SK-N-SH (cell line): ENCODE measurements at regions of chr18 and their contacts with region 1.

Region 1: GRCh38 chr18:70428439-70428838 is 139.6 kb downstream of the SOCS6 start:
- DNase-seq: no peak
- H3K4me3 ChIP-seq: no peak overlapping the region
- H3K27ac ChIP-seq: no peak overlapping the region
- H3K4me1 ChIP-seq: no peaks in the 10 kb centered on the region
- H3K27me3 ChIP-seq: no peaks in the 10 kb centered on the region
- CTCF ChIP-seq: no peak
- EP300 ChIP-seq: no peak
- RAD21 ChIP-seq: no peak

Region 2: DNA sequence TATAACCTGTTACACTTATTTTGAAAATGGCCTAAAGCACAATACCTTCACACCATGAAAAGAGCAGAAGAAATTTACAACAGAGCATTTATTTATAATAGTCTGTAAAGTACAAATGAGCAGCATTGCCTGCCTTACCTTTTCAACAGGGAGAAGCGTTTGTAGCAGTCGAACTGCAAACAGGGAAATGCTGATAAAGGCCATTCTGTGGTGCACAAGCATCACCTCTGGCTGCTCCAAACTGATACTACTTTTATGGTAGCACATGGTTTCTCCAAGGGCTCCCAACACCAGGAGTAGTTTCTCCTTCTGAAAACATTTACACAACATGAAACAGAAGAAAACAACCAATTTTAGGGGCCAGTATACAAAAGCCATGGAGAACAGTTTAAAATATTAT is 251.9 kb before region 1 on chr18:
- CTCF ChIA-PET with region 1: no interaction called
- POLR2A ChIA-PET with region 1: no interaction called
- DNase-seq: no peak
- H3K4me3 ChIP-seq: no peak overlapping the region
- H3K27ac ChIP-seq: no peak overlapping the region
- H3K4me1 ChIP-seq: peaks cover 0 to 7% of the 10 kb centered on the region in 2 experiments; a peak in 2 of 4 replicates
- H3K27me3 ChIP-seq: no peaks in the 10 kb centered on the region
- CTCF ChIP-seq: no peak
- EP300 ChIP-seq: no peak
- RAD21 ChIP-seq: no peak

Region 3: DNA sequence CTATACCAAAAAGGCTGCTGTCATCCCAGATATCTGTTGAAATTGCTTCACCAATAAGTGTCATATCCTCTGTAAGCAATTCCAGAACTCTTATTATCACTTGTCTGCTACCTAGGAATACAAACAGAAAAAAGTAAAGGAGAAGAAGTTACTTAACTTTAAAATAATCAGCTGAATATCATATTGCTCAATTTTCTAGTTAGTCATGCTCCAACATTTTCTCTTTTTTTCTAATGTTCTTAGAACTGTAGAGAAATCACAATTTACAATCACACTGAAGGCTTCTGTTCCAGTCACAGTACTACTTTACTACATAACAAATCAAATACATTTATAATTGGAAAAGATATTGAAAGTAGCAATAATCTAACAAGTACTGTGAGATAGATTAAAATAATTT is 240.3 kb before region 1 on chr18:
- CTCF ChIA-PET with region 1: interaction called, 127 read pairs
- POLR2A ChIA-PET with region 1: no interaction called
- DNase-seq: no peak
- H3K4me3 ChIP-seq: no peak overlapping the region
- H3K27ac ChIP-seq: no peak overlapping the region
- H3K4me1 ChIP-seq: no peaks in the 10 kb centered on the region
- H3K27me3 ChIP-seq: no peaks in the 10 kb centered on the region
- CTCF ChIP-seq: no peak
- EP300 ChIP-seq: no peak
- RAD21 ChIP-seq: no peak

Region 4: DNA sequence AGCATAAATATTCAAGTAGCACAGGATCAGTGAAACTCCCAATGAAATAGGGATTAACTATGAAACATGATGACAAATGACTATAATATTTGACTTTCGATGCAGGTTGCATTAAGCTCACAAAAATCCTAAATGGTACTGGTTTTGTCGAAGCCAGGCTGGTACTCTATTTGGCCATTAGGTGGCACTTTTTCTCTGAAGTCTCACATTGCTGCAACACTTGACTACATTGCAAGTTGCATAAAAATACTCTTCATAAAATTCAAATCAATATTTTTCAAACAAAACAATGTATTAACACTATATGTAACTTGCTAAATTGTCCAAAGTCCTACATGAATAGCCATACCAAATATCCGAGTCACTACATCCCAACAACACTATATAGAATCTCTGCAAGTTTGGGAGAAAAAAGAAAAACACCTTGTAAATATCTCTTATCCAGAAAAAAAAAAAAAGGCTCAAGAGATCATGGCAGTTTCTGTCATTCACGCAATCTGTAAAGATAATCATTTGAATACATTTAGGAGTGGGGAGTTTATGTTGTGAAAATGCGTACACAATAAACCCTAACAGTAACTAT is 232.5 kb before region 1 on chr18:
- CTCF ChIA-PET with region 1: interaction called, 127 read pairs
- POLR2A ChIA-PET with region 1: no interaction called
- DNase-seq: peak; percentile 54
- H3K4me3 ChIP-seq: no peak overlapping the region
- H3K27ac ChIP-seq: no peak overlapping the region
- H3K4me1 ChIP-seq: no peaks in the 10 kb centered on the region
- H3K27me3 ChIP-seq: no peaks in the 10 kb centered on the region
- CTCF ChIP-seq: peak; percentile 96
- EP300 ChIP-seq: no peak
- RAD21 ChIP-seq: peak; percentile 91

Region 5: DNA sequence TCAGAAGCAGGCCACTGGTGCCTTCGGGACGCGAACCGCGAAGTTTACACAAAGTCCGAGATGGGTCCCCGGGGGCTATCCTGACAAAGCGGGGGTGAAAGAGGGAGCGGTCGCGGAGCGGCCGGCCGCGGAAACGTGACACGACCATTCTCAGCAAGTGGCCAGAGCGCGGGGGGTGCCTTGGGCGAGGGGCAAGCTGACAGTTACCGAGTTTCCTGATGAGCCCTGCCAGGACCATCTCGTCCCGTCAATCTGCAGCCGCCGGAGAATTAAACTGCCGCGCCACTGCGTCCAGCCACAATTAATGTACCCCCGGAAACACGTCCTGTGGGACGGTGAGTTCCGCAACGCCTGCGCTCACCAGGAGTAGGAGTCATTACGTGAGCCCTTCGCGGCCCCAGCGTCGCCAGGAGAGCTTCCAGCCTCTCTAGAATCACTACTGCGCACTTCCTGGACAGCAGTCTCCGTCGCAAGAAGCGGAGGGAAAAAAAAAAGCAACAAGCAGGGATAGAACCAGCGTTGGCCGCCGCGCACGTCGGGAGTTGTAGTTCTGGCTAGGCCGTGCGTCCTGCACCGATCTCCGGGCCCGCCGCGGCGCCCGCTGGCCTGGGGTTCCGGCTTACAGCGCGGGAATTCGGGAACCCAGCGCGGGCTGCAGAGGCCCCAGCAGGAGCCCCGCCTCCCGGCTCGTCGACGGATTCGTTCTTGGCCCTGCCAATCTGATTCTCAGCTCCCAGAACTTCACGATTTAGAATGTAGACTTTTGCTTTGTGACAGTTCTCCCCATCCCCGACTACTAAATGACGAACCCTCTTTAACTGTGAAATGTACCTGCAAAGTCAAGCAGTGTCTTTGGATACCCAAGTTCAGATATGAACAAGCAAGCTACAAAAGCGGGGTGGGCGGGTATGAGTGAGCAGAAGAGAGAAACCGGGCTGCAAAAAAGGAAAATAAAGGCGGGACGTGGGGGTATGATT is 222.7 kb before region 1 on chr18 and contains the start of gene RTTN:
- CTCF ChIA-PET with region 1: interaction called, 12 read pairs
- POLR2A ChIA-PET with region 1: no interaction called
- DNase-seq: peak; percentile 91
- H3K4me3 ChIP-seq: peak within 1 kb of the TSS; percentile 97 to 100
- H3K27ac ChIP-seq: peak within 1 kb of the TSS; percentile 98 to 100
- H3K4me1 ChIP-seq: peaks cover 0 to 10% of the 10 kb centered on the region in 2 experiments; a peak in 2 of 4 replicates
- H3K27me3 ChIP-seq: no peaks in the 10 kb centered on the region
- CTCF ChIP-seq: no peak
- EP300 ChIP-seq: peak in 1 of 2 experiments; percentile 58; a peak in 1 of 4 replicates
- RAD21 ChIP-seq: peak; percentile 34
- polyA plus RNA-seq, gene RTTN: 4.7 and 7.1 TPM in 2 replicates

Region 6: DNA sequence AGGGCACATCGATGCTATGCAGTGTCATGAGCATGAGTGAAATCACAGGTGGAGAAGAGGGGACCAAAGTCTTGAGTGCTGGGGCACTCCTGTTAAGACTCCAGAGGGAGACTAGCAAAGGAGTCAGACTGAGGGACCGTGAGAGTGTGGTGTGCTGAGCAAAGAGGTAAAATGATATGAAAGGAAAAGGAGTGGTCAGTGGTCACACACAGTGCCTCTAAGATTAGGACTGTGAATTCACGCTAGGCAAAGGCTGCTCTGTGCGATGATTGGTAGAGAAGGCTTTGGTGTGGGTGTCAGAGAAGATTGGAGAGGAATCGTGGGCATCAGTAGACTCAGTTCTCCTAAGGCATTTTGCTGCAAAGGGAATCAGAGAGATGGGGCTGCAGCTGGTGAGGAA is 126.8 kb before region 1 on chr18:
- CTCF ChIA-PET with region 1: interaction called, 14 read pairs
- POLR2A ChIA-PET with region 1: no interaction called
- DNase-seq: no peak
- H3K4me3 ChIP-seq: no peak overlapping the region
- H3K27ac ChIP-seq: no peak overlapping the region
- H3K4me1 ChIP-seq: peaks cover 0 to 14% of the 10 kb centered on the region in 2 experiments; a peak in 3 of 4 replicates
- H3K27me3 ChIP-seq: no peaks in the 10 kb centered on the region
- CTCF ChIP-seq: no peak
- EP300 ChIP-seq: no peak
- RAD21 ChIP-seq: no peak

Region 7: DNA sequence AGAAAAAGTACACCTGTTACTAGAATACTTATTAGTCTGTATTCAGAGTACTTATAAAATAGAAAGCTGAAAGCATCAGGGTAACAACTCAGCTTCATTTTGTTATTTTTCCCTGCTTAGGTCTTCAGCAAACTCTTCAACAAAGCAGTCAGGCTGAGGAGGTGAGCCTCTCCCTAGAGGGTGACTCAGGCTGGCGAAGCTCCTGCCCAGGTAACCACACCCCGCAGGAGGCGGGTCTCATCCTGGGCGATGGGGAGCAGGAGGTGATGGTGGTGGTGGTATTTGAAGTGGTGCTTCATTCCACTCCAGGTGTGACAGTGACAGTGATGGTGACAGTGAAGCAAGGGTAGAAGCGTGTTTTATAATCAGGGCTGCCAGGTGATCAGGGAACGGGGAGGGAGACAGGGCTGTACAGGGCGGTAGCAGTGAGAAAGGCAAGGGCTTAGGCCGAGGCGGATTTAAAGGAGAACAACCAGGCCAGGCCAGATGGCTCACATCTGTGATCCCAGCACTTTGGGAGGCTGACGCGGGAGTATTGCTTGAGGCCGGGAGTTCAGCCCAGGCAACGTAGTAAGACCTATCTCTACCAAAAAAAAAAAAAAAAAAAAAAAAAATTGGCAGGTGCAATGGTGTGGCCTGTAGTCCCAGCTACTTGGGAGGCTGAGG is 12.5 kb before region 1 on chr18:
- CTCF ChIA-PET with region 1: interaction called, 15 read pairs
- POLR2A ChIA-PET with region 1: no interaction called
- DNase-seq: no peak
- H3K4me3 ChIP-seq: no peak overlapping the region
- H3K27ac ChIP-seq: no peak overlapping the region
- H3K4me1 ChIP-seq: peaks cover 16 to 23% of the 10 kb centered on the region in 2 experiments
- H3K27me3 ChIP-seq: no peaks in the 10 kb centered on the region
- CTCF ChIP-seq: no peak
- EP300 ChIP-seq: no peak
- RAD21 ChIP-seq: no peak

Region 8: DNA sequence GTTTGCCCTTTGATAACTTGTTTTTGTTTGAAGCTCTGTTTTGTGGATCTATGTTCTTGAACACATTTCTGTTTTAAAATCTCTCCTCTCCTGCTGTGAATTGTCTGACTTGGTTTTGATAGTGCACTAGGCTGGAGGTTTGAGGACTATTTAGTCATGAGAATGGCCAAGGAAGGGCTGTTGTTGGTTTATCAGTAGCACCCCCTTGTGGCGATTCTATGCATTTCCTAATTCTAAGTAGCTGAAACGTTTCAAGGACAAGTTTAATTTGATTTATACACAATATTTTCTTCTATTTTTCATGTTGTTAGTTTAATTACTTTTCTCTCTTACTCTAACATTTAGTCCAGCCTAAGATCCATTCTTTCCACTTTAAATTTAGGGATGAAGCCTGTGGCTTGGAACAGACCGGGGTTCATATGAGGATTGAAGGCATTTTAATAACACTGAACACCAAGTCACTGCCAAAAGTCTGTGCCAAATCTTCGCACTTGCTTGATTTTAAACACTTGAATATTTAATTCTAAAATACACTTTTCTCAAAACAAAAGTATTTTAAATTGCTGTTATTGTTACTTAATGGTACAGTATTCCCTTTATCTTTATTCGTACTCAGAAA is 26.4 kb after region 1 on chr18:
- CTCF ChIA-PET with region 1: interaction called, 47 read pairs
- POLR2A ChIA-PET with region 1: no interaction called
- DNase-seq: peak; percentile 55
- H3K4me3 ChIP-seq: no peak overlapping the region; a peak in 1 of 4 replicates
- H3K27ac ChIP-seq: no peak overlapping the region
- H3K4me1 ChIP-seq: no peaks in the 10 kb centered on the region; a peak in 1 of 4 replicates
- H3K27me3 ChIP-seq: no peaks in the 10 kb centered on the region
- CTCF ChIP-seq: peak; percentile 96
- EP300 ChIP-seq: no peak
- RAD21 ChIP-seq: peak; percentile 77

Region 9: GRCh38 chr18:70491734-70492348 is 63.4 kb after region 1 on chr18:
- CTCF ChIA-PET with region 1: no interaction called
- POLR2A ChIA-PET with region 1: no interaction called
- DNase-seq: peak; percentile 55
- H3K4me3 ChIP-seq: no peak overlapping the region; a peak in 1 of 4 replicates
- H3K27ac ChIP-seq: no peak overlapping the region
- H3K4me1 ChIP-seq: peaks cover 6 to 14% of the 10 kb centered on the region in 2 experiments; a peak in 3 of 4 replicates
- H3K27me3 ChIP-seq: no peaks in the 10 kb centered on the region
- CTCF ChIP-seq: peak; percentile 89
- EP300 ChIP-seq: no peak
- RAD21 ChIP-seq: peak; percentile 72

Region 10: DNA sequence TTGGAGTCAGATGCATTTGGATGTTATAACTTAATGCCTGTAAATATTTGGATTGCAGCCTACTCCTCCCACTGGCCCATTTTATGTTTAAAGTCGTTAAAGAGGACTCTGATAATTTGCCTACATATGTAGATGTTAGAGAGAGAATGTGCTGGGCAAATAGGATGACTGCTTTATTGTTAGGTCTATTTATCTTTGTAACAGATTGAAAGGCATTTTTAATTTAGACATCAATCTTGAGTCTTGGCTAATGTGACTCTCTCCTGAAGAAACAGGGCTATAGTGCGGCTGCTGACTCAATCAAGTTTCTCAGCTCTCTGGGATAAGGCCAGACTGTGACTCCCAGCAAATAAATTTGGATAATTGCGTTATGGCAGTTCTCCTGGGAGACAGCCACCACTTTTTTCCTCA is 1014.3 kb after region 1 on chr18:
- CTCF ChIA-PET with region 1: no interaction called
- POLR2A ChIA-PET with region 1: no interaction called
- DNase-seq: no peak
- H3K4me3 ChIP-seq: no peak overlapping the region
- H3K27ac ChIP-seq: peak overlapping the region in 1 of 2 experiments; percentile 72; a peak in 3 of 4 replicates
- H3K4me1 ChIP-seq: peaks cover 3 to 13% of the 10 kb centered on the region in 2 experiments
- H3K27me3 ChIP-seq: no peaks in the 10 kb centered on the region
- CTCF ChIP-seq: no peak
- EP300 ChIP-seq: peak in 1 of 2 experiments; percentile 46; a peak in 1 of 4 replicates
- RAD21 ChIP-seq: no peak